ENCODE measurements at regions of chr15 and their contacts with region 1.

Region 1: GRCh38 chr15:64093627-64094417 is at the start of gene CIAO2A:
- DNase-seq: peak; percentile 99
- ATAC-seq: peak; percentile 92
- H3K4me3 ChIP-seq: peak within 1 kb of the TSS; percentile 92 to 97
- H3K27ac ChIP-seq: peak within 1 kb of the TSS; percentile 99
- H3K4me1 ChIP-seq: peaks cover 32% of the 10 kb centered on the region
- H3K27me3 ChIP-seq: no peaks in the 10 kb centered on the region
- CTCF ChIP-seq: no peak
- total RNA-seq, gene CIAO2A: 89.8 TPM

Region 2: DNA sequence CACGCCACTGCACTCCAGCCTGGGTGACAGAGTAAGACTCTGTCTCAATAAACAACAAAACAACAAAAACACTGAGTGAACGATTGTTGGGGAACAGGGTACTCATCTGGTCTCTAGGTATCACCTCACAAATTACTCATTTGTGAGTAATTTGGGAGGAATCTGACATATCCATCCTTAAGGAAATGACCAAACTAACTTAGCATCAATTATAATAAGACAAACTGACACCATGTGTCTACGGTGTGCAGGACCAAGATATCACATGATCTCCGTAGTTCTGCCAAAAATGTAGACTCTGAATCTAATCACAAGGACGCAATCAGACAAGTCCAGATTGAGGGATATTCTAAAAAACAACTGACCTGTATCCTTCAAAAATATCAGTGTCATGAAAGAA is 35.5 kb before region 1 on chr15:
- CTCF ChIA-PET with region 1: no interaction called
- POLR2A ChIA-PET with region 1: no interaction called
- in situ Hi-C with region 1: no loop called
- intact Hi-C with region 1: no loop called
- DNase-seq: no peak
- ATAC-seq: no peak
- H3K4me3 ChIP-seq: no peak overlapping the region
- H3K27ac ChIP-seq: no peak overlapping the region
- H3K4me1 ChIP-seq: no peaks in the 10 kb centered on the region
- H3K27me3 ChIP-seq: no peaks in the 10 kb centered on the region; the same call in 1 of the 2 replicates
- CTCF ChIP-seq: no peak

Region 3: DNA sequence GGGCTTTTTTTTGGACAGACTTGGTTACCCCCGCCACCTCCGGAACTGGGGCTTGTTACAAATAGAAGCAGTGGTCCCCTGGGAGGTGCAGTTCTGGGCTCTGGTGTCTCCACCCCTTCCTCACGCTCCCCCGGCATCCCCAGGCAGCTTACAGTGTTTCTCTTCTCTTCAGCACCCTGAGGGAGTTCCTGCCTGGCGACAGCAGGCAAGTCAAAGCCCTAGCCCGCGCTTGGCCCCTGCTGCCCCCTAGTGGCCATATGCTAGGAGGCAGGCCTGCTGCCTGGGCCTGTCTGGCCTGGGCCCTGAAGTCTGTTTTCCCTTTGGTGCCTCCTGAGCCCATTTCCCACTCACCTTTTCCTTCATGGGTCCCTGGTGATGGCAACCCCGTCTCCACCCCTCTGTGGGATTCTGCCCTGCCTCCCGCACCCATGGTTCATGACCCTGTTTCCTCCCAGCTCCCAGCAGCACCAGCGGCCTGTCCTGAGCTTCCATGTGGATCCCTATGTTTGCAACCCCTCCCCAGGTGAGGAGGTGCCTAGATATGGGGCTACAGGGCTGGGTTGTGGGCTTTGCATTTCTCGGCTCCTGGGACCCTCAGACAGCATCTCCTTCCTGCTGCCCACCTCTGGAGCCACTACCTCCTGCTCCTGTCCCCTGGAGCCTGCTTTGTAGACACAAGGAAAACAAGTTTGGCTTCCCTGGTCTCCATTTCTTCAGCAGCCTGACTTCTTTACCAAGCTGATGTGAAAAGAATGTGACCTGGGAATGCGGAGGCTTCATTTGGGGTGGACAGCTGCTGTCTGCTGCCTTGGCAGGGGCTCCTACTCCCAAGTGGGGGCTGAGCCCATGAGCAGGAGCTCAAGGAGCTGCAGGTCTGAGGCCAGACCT is 59.9 kb after region 1 on chr15:
- CTCF ChIA-PET with region 1: interaction called, 12 read pairs
- POLR2A ChIA-PET with region 1: interaction called, 7 read pairs
- in situ Hi-C with region 1: no loop called
- intact Hi-C with region 1: no loop called
- DNase-seq: peak; percentile 72
- ATAC-seq: peak; percentile 88
- H3K4me3 ChIP-seq: no peak overlapping the region
- H3K27ac ChIP-seq: peak overlapping the region; percentile 62
- H3K4me1 ChIP-seq: peaks cover 9% of the 10 kb centered on the region
- H3K27me3 ChIP-seq: no peaks in the 10 kb centered on the region
- CTCF ChIP-seq: peak; percentile 99